IMR-90 (cell line): ENCODE measurements at regions of chr18 and their contacts with region 1.

Region 1: GRCh38 chr18:21669736-21670135 is 34.8 kb downstream of the ABHD3 start:
- DNase-seq: no peak
- ATAC-seq: no peak
- H3K4me3 ChIP-seq: no peak overlapping the region
- H3K27ac ChIP-seq: no peak overlapping the region
- H3K4me1 ChIP-seq: no peaks in the 10 kb centered on the region
- H3K27me3 ChIP-seq: no peaks in the 10 kb centered on the region
- CTCF ChIP-seq: no peak
- POLR2A ChIP-seq: no peak
- RAD21 ChIP-seq: no peak

Region 2: DNA sequence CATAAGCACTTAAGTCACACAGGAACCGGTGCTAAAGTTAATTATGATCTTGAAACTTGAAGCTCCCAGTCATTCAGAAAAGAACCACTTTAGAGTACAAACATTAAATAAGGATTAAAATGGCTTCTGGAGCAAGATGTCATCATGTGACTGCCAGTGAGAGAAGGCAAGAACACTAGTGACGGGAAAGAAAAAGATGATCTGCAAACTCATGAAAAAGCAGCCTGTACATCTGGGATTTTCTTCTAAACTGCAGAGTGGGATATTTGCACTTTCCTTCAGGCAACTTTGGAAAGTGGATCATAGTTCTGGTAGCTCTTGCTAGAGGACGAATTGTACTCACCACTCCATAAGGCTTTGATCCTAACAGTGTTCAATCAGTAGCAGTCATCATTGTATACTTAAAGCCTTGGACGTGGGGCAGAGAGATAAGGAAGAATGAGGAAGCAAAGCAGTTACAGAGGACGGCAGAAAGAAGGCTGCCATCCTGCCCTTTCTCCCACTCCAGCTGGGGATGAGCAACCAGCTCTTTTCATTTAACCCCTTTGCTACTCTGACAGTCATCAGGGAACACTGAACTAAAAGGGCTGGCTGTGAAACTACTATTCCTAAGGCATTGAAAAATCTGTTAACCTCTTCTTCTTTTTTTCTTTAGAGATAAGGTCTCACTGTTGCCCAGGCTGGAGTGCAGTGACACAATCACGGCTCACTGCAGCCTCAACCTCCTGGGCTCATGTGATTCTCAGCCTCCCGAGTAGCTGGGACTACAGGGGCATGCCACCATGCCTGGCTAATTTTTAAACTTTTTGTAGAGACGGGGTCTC is 16.8 kb after region 1 on chr18:
- CTCF ChIA-PET with region 1: no interaction called
- POLR2A ChIA-PET with region 1: no interaction called
- dilution Hi-C with region 1: no loop called
- in situ Hi-C with region 1: no loop called
- intact Hi-C with region 1: no loop called
- DNase-seq: peak; percentile 59
- ATAC-seq: peak; percentile 79
- H3K4me3 ChIP-seq: peak overlapping the region; percentile 5; the same call in 1 of the 2 replicates
- H3K27ac ChIP-seq: peak overlapping the region; percentile 77; the same call in 1 of the 2 replicates
- H3K4me1 ChIP-seq: no peaks in the 10 kb centered on the region; the same call in none of the 2 replicates
- H3K27me3 ChIP-seq: no peaks in the 10 kb centered on the region
- CTCF ChIP-seq: no peak
- POLR2A ChIP-seq: no peak
- RAD21 ChIP-seq: no peak

Region 3: GRCh38 chr18:21727702-21728101 is 58.0 kb after region 1 on chr18:
- CTCF ChIA-PET with region 1: no interaction called
- POLR2A ChIA-PET with region 1: no interaction called
- dilution Hi-C with region 1: no loop called
- in situ Hi-C with region 1: no loop called
- intact Hi-C with region 1: loop called (anchors 10 kb)
- DNase-seq: no peak
- ATAC-seq: no peak
- H3K4me3 ChIP-seq: no peak overlapping the region
- H3K27ac ChIP-seq: no peak overlapping the region
- H3K4me1 ChIP-seq: no peaks in the 10 kb centered on the region
- H3K27me3 ChIP-seq: no peaks in the 10 kb centered on the region
- CTCF ChIP-seq: no peak
- POLR2A ChIP-seq: no peak
- RAD21 ChIP-seq: no peak